ENCODE measurements at regions of chr1 and their contacts with region 1.

Region 1: GRCh38 chr1:44792783-44793714 is 5.1 kb upstream of the BEST4 start:
- DNase-seq: no peak
- H3K4me3 ChIP-seq: no peak overlapping the region
- CTCF ChIP-seq: no peak

Region 2: DNA sequence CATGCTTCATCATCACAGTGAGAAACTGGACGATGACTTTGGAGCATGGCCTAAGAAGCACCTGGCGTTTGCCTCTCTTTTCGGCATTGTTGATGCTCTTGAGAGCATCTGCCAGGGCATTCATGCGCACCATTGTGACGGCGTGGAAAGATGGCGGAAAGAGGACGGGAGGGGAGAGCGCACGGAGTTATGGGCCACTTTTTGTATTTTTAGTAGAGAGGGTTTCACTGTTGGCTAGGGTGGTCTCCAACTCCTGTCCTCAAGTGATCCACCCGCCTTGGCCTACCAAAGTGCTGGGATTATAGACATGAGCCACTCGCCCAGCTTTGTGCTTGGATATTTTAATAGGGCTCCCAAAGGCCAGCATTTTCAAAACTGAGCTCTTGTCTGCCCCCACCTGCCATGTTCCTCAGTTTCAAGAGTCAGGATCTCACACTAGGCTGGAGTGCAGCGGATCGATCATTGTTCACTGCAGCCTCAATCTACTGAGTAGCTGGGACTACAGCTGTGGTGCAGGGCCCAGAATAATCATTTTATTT is 12.4 kb before region 1 on chr1:
- CTCF ChIA-PET with region 1: interaction called, 40 read pairs
- POLR2A ChIA-PET with region 1: interaction called, 13 read pairs
- DNase-seq: no peak
- H3K4me3 ChIP-seq: no peak overlapping the region
- CTCF ChIP-seq: no peak

Region 3: DNA sequence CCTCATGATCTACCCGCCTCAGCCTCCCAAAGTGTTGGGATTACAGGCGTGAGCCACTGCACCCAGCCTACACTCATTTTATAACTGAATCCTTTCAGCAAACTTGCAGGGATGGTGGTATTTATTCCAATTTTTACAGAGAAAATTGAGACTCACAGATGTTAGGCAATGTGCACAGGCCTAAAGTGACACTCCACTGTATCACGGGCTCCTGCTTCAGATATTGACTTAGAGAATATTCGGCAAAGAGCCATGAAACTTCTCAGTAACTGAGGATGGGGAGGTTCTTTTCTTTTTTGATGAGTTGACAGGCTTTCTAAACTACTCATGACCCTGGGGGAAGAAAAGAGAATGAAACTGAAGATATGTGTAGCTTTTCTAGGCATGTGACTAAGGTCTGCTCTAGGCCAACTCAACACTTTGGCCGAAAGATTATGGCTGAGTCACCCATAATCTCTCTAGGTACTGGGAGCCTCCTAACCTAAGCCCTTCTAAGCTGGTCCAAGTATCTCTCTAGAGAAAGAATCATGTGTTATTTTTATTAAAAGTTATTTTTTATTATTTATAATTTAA is 69.9 kb after region 1 on chr1:
- CTCF ChIA-PET with region 1: no interaction called
- POLR2A ChIA-PET with region 1: no interaction called
- DNase-seq: no peak
- H3K4me3 ChIP-seq: no peak overlapping the region
- CTCF ChIP-seq: no peak